ENCODE measurements at regions of chr6 and their contacts with region 1.

Region 1: GRCh38 chr6:38871741-38872568 is 156.8 kb downstream of the DNAH8 start:
- DNase-seq: peak; percentile 20 to 74 (median 50)
- ATAC-seq: peak; percentile 53
- H3K4me3 ChIP-seq: no peak overlapping the region
- H3K4me3 Mint-ChIP-seq: no peak overlapping the region
- H3K27ac ChIP-seq: no peak overlapping the region
- H3K27ac Mint-ChIP-seq: no peak overlapping the region
- H3K4me1 ChIP-seq: peaks cover 14% of the 10 kb centered on the region
- H3K4me1 Mint-ChIP-seq: peaks cover 44% of the 10 kb centered on the region
- H3K27me3 ChIP-seq: no peaks in the 10 kb centered on the region
- H3K27me3 Mint-ChIP-seq: no peaks in the 10 kb centered on the region
- CTCF ChIP-seq: peak; percentile 86

Region 2: DNA sequence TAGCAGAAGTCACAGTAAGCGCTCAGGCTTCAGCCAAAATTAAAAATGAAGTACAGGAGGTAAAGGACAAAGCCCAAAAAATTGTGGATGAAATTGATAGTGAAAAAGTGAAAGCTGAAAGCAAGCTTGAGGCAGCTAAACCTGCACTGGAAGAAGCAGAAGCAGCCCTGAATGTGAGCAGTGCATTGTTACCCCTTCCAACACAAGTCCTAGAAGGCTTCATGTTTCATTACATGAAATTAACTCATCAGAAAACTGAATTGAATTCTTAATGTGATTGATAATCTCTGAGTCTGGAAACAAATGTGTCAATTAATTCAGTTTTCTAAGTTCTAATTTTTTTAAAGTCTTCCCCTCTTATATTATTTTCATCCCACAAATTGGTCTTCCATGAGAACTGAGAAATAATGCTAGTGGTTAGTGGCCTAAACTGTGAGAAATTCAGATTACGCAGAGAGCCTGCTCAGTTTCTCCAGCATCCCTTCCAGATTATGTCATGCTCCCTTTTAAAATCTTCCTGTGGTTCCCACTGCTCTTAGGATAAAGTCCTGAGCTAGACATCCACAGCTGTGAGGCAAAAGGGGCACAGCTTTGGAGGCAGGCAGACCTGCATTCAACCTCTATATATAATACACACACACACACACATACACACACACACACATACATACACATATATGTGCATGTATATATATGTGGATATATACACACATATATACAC is 43.4 kb after region 1 on chr6:
- CTCF ChIA-PET with region 1: no interaction called
- POLR2A ChIA-PET with region 1: no interaction called
- intact Hi-C with region 1: no loop called
- DNase-seq: no peak
- ATAC-seq: no peak
- H3K4me3 ChIP-seq: no peak overlapping the region
- H3K4me3 Mint-ChIP-seq: no peak overlapping the region
- H3K27ac ChIP-seq: no peak overlapping the region
- H3K27ac Mint-ChIP-seq: no peak overlapping the region
- H3K4me1 ChIP-seq: no peaks in the 10 kb centered on the region
- H3K4me1 Mint-ChIP-seq: no peaks in the 10 kb centered on the region
- H3K27me3 ChIP-seq: no peaks in the 10 kb centered on the region
- H3K27me3 Mint-ChIP-seq: no peaks in the 10 kb centered on the region
- CTCF ChIP-seq: no peak

Region 3: GRCh38 chr6:38933432-38933831 is 61.5 kb after region 1 on chr6:
- CTCF ChIA-PET with region 1: no interaction called
- POLR2A ChIA-PET with region 1: interaction called, 4 read pairs
- intact Hi-C with region 1: loop called (anchors 1 to 5 kb)
- DNase-seq: peak in 3 of 14 experiments; percentile 15 to 30 (median 28)
- ATAC-seq: no peak
- H3K4me3 ChIP-seq: no peak overlapping the region
- H3K4me3 Mint-ChIP-seq: no peak overlapping the region
- H3K27ac ChIP-seq: no peak overlapping the region
- H3K27ac Mint-ChIP-seq: no peak overlapping the region
- H3K4me1 ChIP-seq: no peaks in the 10 kb centered on the region
- H3K4me1 Mint-ChIP-seq: no peaks in the 10 kb centered on the region
- H3K27me3 ChIP-seq: no peaks in the 10 kb centered on the region
- H3K27me3 Mint-ChIP-seq: peaks cover 5% of the 10 kb centered on the region
- CTCF ChIP-seq: no peak

Region 4: GRCh38 chr6:39102071-39102820 is 230.3 kb after region 1 on chr6:
- CTCF ChIA-PET with region 1: no interaction called
- POLR2A ChIA-PET with region 1: no interaction called
- intact Hi-C with region 1: loop called in 1 of 2 experiments (anchors 5 kb)
- DNase-seq: peak in 3 of 14 experiments; percentile 32 to 47 (median 36)
- ATAC-seq: peak; percentile 50
- H3K4me3 ChIP-seq: no peak overlapping the region
- H3K4me3 Mint-ChIP-seq: no peak overlapping the region
- H3K27ac ChIP-seq: no peak overlapping the region
- H3K27ac Mint-ChIP-seq: no peak overlapping the region
- H3K4me1 ChIP-seq: peaks cover 3% of the 10 kb centered on the region
- H3K4me1 Mint-ChIP-seq: peaks cover 31% of the 10 kb centered on the region
- H3K27me3 ChIP-seq: no peaks in the 10 kb centered on the region
- H3K27me3 Mint-ChIP-seq: no peaks in the 10 kb centered on the region
- CTCF ChIP-seq: peak; percentile 27

Region 5: DNA sequence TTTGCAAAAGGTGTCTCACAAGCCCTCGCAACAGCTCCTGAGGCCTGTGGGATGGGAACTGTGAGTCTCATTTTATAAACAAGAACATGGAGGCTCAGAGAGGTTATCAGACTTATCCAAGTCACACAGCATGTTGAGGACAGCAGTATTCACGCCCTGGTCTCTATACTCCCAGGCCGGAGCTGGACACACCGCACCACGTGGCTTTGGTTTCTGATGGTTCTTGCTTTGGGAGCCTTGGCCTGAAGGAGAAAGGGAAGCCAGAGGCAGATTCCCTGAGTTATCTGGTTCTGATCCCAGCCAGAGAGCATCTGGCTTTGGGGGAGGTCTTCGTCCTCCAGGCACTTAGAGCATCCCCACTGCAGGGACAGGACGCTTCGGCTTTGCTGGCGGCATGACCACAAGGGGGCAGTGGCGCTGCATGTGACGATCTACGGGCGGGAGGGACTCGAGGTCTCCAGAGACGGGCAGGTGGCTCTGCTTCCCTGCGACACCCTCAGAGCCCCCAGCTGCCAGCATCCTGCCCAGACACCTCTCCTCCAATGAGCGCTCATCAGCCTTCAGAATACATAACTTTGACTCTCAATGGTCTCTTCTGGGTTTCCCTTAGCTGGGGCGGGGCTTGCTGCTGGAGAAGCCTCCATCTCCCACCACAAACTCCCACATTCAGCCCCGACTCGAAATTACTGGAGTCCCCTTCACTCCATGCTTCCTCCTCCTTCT is 294.4 kb after region 1 on chr6:
- CTCF ChIA-PET with region 1: no interaction called
- POLR2A ChIA-PET with region 1: no interaction called
- intact Hi-C with region 1: loop called (anchors 1 to 5 kb)
- DNase-seq: peak; percentile 66 to 87 (median 78)
- ATAC-seq: peak; percentile 78
- H3K4me3 ChIP-seq: no peak overlapping the region
- H3K4me3 Mint-ChIP-seq: no peak overlapping the region
- H3K27ac ChIP-seq: no peak overlapping the region
- H3K27ac Mint-ChIP-seq: no peak overlapping the region
- H3K4me1 ChIP-seq: peaks cover 7% of the 10 kb centered on the region
- H3K4me1 Mint-ChIP-seq: no peaks in the 10 kb centered on the region
- H3K27me3 ChIP-seq: no peaks in the 10 kb centered on the region
- H3K27me3 Mint-ChIP-seq: no peaks in the 10 kb centered on the region
- CTCF ChIP-seq: peak; percentile 86

Region 6: GRCh38 chr6:39309942-39310531 is 438.1 kb after region 1 on chr6:
- CTCF ChIA-PET with region 1: interaction called, 5 read pairs
- POLR2A ChIA-PET with region 1: no interaction called
- intact Hi-C with region 1: loop called (anchors 1 kb)
- DNase-seq: peak; percentile 25 to 70 (median 46)
- ATAC-seq: peak; percentile 61
- H3K4me3 ChIP-seq: no peak overlapping the region
- H3K4me3 Mint-ChIP-seq: no peak overlapping the region
- H3K27ac ChIP-seq: no peak overlapping the region
- H3K27ac Mint-ChIP-seq: no peak overlapping the region
- H3K4me1 ChIP-seq: peaks cover 10% of the 10 kb centered on the region
- H3K4me1 Mint-ChIP-seq: no peaks in the 10 kb centered on the region
- H3K27me3 ChIP-seq: peaks cover 33 to 35% of the 10 kb centered on the region in 2 experiments
- H3K27me3 Mint-ChIP-seq: peaks cover 36% of the 10 kb centered on the region
- CTCF ChIP-seq: peak; percentile 66

Measured in CD4-positive, alpha-beta T cell (primary cell).